ENCODE measurements at regions of chr11 and their contacts with region 1.

Region 1: GRCh38 chr11:35617687-35618496 is at the start of gene FJX1:
- DNase-seq: peak; percentile 74

Region 2: DNA sequence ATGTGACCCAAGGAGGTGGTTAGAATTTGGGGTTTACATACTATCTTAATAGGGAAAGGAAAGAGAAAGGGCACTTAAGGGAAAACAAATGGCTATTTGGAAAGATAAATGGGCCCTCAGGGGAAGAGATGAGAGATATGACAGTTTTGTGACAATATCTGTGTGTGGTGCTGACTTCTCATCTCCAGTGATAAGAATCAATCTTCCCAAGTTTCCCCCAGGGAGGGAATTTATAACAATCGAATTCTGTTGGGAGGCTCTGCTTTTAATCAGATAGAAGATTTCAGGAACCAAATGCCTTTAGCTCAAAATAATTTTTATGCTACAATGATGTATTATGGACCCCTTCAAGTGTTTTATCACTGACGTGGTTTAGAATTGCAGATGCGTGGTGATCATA is 46.2 kb before region 1 on chr11:
- CTCF ChIA-PET with region 1: no interaction called
- POLR2A ChIA-PET with region 1: no interaction called
- DNase-seq: no peak

Region 3: DNA sequence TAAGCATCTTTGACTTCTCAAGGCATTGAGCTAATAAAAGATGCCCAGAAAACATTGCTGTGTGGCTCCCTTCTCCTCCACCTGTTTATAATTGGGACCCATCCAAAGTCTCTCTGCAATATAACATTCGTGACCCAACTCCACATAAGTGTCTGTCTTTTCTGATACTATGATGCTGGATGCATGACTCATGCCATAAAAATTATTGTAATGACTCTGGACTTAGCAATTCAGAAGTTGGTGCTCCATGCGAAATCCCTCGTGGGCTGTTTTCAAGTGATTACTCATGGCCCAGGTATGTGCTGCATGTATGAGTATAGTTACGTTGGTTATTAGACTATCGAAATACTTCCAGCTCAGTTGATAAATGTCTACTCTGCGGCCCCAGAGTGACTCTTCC is 12.0 kb after region 1 on chr11:
- CTCF ChIA-PET with region 1: no interaction called
- POLR2A ChIA-PET with region 1: interaction called, 21 read pairs
- DNase-seq: no peak

Region 4: GRCh38 chr11:35662649-35663407 is 44.9 kb after region 1 on chr11 and contains the start of gene TRIM44:
- CTCF ChIA-PET with region 1: no interaction called
- POLR2A ChIA-PET with region 1: interaction called, 11 read pairs
- DNase-seq: peak; percentile 68

Measured in HEK293T (cell line).